Lower leg skin (tissue), 4 donors: ENCODE measurements at regions of chr1 and their contacts with region 1.

Region 1: GRCh38 chr1:184945029-184945428 is 29.3 kb downstream of the NIBAN1 start:
- DNase-seq: no peak
- H3K4me3 ChIP-seq: no peak overlapping the region
- CTCF ChIP-seq: no peak
- POLR2A ChIP-seq: no peak

Region 2: DNA sequence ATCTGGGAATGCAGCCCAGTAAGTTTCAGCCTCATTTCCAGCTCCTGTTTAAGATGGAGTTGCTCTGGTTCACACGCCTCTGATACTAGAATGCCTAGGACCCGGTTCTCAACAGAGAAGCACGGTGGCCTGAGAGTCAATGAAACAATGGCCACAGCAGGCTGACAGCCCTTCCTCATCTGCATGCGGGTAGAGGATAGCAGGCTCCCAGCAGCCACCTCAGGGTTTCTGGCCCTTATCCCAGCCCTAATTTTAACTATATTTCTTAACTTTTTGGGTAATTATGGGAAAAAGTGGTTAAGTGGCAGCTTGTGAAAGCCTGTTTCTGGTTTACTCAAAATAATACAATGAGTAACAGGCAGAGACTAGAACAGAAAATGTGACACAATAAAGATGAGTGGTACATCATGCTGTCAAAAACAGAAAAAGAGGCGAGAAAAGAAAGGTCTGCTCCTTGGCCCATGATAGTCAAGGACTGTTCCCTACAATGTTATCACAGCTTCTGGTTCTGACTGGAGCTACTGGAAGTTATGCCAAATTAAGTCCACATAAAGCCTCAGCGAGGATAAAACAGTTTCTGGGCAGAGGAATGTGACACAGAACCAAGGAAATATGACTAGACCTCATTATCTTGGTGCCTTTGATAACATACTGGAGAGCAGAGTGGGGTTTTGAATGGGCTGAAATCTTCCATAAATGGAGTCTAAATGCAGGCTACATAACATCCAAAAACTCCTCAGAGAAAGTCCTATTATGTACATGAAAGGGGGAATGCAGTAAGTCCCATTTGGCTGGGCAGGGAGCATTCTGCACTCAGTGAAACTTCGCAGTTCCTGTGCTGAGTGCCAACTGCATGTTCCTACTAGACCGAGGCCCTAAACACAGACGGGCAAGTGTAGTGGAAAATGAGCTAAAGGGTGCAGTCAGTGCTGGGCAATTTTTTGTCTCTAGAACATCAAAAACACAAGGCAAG is 62.8 kb before region 1 on chr1:
- intact Hi-C with region 1: loop called (anchors 10 kb)
- DNase-seq: no peak
- H3K4me3 ChIP-seq: no peak overlapping the region
- CTCF ChIP-seq: no peak
- POLR2A ChIP-seq: no peak